Activated T-helper 2 cell treated with anti-CD3 and anti-CD28 coated beads, Interferon-gamma antibody, Interleukin-2, Interleukin-4, amounts not matched to agents 10 μg/mL and 5 μg/mL and 100 μg/mL, durations not matched to agents 14 hours and 24 hours and 36 hours (primary cell): ENCODE measurements at regions of chr12 and their contacts with region 1.

Region 1: GRCh38 chr12:56688129-56688845 is at the start of gene PTGES3:
- DNase-seq: peak; percentile 99
- H3K4me3 Mint-ChIP-seq: peak within 1 kb of the TSS; percentile 100
- H3K27ac Mint-ChIP-seq: peak within 1 kb of the TSS; percentile 98
- H3K4me1 Mint-ChIP-seq: peaks cover 20% of the 10 kb centered on the region
- H3K27me3 Mint-ChIP-seq: no peaks in the 10 kb centered on the region
- total RNA-seq, gene PTGES3: 293 and 298 TPM in 2 replicates

Region 2: GRCh38 chr12:56521590-56522371 is 166.5 kb before region 1 on chr12 and contains the start of gene RBMS2:
- intact Hi-C with region 1: no loop called
- DNase-seq: peak; percentile 23
- H3K4me3 Mint-ChIP-seq: peak within 1 kb of the TSS; percentile 81
- H3K27ac Mint-ChIP-seq: peak within 1 kb of the TSS; percentile 83
- H3K4me1 Mint-ChIP-seq: peaks cover 28% of the 10 kb centered on the region
- H3K27me3 Mint-ChIP-seq: no peaks in the 10 kb centered on the region
- total RNA-seq, gene RBMS2: 7.9 and 11.0 TPM in 2 replicates

Region 3: DNA sequence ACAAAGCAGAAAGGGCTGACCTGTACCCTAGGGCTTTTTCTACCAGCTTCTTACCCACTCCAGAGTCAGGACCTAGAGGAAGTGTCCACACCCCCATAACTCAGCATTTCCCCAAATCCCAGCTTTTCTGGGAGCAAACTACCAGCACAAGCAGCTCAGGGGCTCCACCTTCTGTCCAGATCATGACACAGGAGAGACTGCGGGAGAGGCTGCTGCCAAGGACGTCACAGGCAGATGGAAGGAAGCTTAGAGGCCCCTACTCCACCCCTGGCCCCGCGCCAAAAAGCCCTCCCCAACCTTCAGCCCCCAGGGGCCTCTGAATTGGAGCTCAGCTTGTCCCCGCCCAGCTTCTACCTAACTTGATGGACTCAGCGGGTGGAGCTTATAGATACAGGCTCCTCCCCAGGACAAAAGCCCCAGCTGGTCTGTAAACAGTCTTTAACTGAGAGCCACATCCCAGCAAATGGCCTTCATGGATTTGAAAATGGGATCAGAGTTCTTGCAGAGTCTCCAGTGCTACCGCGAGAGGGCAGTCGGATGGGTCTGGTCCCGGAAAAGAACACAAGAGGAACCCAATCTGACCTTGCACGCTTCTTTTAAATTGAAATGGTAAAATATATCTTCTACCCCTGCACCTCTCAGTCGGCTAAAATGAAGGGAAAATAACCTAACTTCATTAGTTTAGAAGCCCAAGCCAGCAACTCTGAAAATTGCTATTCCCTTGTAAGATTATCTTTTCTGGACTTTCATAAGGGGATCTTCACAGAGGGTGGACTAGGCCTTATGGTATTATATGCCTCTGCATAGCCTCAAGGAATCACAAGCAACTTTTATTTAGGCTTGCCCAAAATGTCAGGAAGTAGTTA is 51.4 kb before region 1 on chr12:
- intact Hi-C with region 1: loop called (anchors 1 kb)
- DNase-seq: peak; percentile 87
- H3K4me3 Mint-ChIP-seq: peak overlapping the region; percentile 97
- H3K27ac Mint-ChIP-seq: peak overlapping the region; percentile 93
- H3K4me1 Mint-ChIP-seq: peaks cover 47% of the 10 kb centered on the region
- H3K27me3 Mint-ChIP-seq: no peaks in the 10 kb centered on the region

Region 4: GRCh38 chr12:56645717-56646446 is 42.4 kb before region 1 on chr12 and contains the start of gene ATP5F1B:
- intact Hi-C with region 1: loop called (anchors 2 kb)
- DNase-seq: peak; percentile 93
- H3K4me3 Mint-ChIP-seq: peak within 1 kb of the TSS; percentile 98
- H3K27ac Mint-ChIP-seq: peak within 1 kb of the TSS; percentile 97
- H3K4me1 Mint-ChIP-seq: peaks cover 29% of the 10 kb centered on the region
- H3K27me3 Mint-ChIP-seq: no peaks in the 10 kb centered on the region
- total RNA-seq, gene ATP5F1B: 729 and 735 TPM in 2 replicates

Region 5: GRCh38 chr12:56677680-56678079 is 10.6 kb before region 1 on chr12:
- intact Hi-C with region 1: no loop called
- DNase-seq: no peak
- H3K4me3 Mint-ChIP-seq: no peak overlapping the region
- H3K27ac Mint-ChIP-seq: peak overlapping the region; percentile 67
- H3K4me1 Mint-ChIP-seq: peaks cover 35% of the 10 kb centered on the region
- H3K27me3 Mint-ChIP-seq: no peaks in the 10 kb centered on the region

Region 6: GRCh38 chr12:56751712-56752598 is 63.7 kb after region 1 on chr12 and contains the start of gene PRIM1:
- intact Hi-C with region 1: loop called (anchors 1 kb)
- DNase-seq: peak; percentile 88
- H3K4me3 Mint-ChIP-seq: peak within 1 kb of the TSS; percentile 98
- H3K27ac Mint-ChIP-seq: peak within 1 kb of the TSS; percentile 99
- H3K4me1 Mint-ChIP-seq: peaks cover 39% of the 10 kb centered on the region
- H3K27me3 Mint-ChIP-seq: no peaks in the 10 kb centered on the region
- total RNA-seq, gene PRIM1: 59.4 and 63.9 TPM in 2 replicates

Region 7: GRCh38 chr12:57088459-57089248 is 400.4 kb after region 1 on chr12 and contains the start of gene NAB2:
- intact Hi-C with region 1: loop called (anchors 1 kb)
- DNase-seq: peak; percentile 91
- H3K4me3 Mint-ChIP-seq: peak within 1 kb of the TSS; percentile 99
- H3K27ac Mint-ChIP-seq: peak within 1 kb of the TSS; percentile 98
- H3K4me1 Mint-ChIP-seq: peaks cover 62% of the 10 kb centered on the region
- H3K27me3 Mint-ChIP-seq: no peaks in the 10 kb centered on the region
- total RNA-seq, gene NAB2: 72.8 and 74.7 TPM in 2 replicates

Region 8: DNA sequence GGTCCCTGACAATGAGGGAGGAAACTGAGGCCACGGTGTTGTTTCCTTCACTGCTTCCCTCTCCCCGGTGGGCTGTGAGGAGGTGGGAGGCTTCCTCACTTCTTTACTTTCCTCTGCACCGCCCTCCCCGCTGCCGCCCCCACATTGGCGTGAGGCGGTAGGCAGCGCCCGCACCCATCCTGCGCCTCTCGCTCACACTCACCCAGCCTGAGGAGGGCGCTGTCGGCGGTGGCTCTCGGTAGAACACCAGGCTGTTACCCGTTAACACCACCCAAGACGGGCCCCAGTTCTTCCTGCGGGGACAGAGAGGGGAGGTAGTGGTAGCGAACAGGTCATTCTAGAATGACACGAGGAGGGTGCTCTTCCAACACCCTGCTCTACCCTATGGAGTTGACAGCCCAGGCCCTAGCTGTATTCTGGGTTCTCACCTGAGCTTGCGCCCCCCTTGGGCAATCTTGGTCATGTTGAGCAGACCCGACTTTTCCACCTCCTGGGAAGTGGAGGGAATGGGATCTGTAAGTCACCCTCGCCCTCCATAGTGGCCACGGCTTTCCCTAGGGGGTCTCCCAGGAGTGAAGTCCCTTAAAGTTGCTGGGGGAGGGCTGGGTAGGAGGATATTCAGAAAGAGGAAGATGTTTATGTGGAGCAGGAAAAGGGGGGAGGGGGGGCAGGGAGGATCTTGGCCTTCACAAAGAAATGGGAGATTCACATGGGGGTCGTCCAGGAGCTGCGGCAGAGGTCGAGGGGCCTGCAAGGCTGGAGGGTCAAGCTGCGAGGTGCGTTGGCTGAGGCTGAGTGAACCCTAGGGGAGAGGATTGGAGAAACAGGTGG is 788.1 kb after region 1 on chr12:
- intact Hi-C with region 1: loop called (anchors 2 kb)
- DNase-seq: peak; percentile 72
- H3K4me3 Mint-ChIP-seq: peak overlapping the region; percentile 93
- H3K27ac Mint-ChIP-seq: peak overlapping the region; percentile 100
- H3K4me1 Mint-ChIP-seq: peaks cover 47% of the 10 kb centered on the region
- H3K27me3 Mint-ChIP-seq: no peaks in the 10 kb centered on the region